ENCODE measurements at regions of chr2 and their contacts with region 1.

Region 1: DNA sequence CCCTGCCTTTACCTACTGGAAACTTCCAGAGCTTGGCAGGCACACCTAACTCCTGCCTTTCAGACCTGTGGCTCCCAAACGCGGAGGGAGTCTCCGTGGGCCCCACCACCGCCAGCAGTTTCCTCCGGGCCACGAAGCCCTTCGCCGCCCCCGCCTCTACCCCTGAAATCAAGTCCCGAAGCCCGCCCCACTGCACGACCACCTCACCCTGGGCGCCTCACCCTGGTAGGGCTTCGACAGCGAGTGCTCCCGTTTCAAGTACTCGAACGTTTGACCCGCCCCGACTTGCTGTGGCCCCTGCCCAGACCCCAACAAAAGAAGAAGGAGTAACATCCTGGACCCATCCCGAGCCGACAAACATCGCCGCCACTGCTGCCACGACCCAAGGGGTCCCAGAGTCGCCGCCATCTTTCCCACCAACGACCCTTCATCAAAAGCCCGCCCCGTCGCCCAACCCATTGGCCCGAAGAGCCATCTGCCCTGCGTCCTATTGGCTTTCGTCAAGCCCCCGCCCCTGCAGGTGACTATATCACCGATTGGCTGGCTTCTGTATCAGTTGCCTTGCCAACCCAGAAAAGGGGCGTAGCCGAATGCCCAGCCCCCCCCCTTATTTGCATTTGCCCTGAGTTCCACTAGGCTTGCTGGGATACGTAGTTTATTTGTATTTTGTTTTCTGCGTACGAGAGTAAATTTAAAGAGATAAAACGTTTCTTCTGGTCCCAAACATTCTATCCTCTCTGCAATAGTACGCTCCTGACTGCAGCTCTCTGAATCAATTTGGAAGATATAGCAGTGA is at the start of gene LMAN2L:
- DNase-seq: peak; percentile 98
- ATAC-seq: peak; percentile 98
- total RNA-seq, gene LMAN2L: 26.2 TPM

Region 2: DNA sequence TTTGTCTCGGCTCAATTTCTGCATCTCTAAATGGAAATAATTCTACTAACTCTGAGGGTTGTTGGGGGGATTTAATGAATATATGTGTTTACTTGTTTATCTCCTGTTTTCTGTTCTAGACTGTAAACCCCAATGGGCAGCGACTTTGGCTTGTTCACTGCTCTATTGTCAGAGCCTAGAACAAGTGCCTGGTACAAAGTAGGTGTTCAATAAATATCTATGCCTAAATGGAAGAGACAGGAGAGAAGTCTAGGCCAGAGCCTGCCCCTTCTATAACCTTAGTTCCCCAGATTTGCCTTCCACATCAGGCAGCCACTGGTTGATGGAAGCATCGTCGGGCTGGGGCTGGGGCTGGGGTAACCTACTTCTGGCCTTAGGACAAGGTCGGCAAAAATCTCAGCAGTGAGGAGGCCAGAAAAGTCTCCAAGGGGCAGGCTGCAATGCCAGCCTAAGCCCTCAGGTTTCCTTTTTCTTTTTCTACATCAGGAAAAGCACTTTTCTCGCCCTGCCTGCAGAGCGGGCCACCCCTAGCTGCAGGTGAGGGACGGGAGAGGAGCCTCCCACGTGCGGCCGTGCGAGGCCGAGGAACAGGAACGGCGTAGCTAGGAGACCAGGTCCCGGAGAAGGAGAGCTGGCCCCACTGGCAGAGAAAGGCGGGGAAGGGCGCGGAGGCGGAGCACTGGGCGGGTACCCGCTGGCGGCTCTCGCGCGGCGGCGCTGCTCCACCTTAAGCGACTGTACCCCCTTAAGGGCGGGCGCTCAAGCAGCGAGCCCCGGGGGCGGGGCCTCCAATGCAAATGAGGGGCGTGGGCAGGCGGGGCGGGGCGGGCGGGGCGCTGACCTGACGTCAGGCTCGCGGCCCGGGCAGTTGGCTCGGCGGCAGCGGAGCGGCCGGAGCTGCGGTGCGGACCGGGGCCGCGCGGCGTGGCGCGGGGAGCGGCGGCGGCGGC is 20.5 kb after region 1 on chr2 and contains the start of gene CNNM4:
- intact Hi-C with region 1: loop called (anchors 1 kb)
- DNase-seq: peak; percentile 98
- ATAC-seq: peak; percentile 97
- total RNA-seq, gene CNNM4: 33.3 TPM

Region 3: GRCh38 chr2:96960153-96960961 is 220.5 kb after region 1 on chr2:
- intact Hi-C with region 1: loop called (anchors 10 kb)
- DNase-seq: peak; percentile 92
- ATAC-seq: peak; percentile 97

Measured in Right ventricle myocardium inferior (tissue), 1 donor.